ENCODE measurements at regions of chr16 and their contacts with region 1.

Region 1: DNA sequence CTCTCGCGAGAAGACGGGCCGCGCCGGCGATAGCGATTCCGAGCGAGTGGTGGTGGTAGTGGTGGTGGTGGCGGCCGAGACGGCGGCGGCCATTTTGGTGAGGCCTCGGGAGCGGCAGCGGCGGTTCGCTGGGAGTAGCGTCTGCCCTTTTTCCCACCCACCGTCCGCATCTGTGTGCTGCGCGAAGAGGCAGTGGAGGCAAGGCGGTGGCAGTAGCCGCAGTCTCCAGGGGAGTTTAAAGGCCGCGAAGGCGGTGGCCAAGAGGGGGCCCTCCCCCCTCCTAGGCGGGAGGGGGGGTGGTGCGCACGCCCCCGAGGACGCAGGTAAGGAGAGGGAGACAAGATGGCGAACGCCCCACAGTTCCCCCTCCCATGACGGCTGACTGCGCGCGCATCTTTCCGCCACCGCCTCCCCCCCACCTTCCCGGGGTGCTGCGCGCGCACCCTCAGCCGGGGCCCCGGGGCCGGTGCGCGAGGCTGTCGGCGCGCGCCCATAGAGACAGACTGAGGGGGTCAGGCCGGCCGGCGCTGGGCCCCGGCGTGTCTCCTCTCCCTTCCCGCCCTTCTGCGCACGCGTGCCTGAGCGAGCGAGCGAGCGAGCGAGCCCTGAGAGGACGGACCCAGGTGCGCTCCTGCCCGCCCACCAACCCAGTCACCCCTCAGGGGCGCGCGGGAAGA is 694 bp upstream of the SRCAP start:
- DNase-seq: peak; percentile 77
- H3K4me3 ChIP-seq: peak overlapping the region; percentile 95
- CTCF ChIP-seq: no peak

Region 2: GRCh38 chr16:30677931-30678585 is 20.2 kb before region 1 on chr16:
- CTCF ChIA-PET with region 1: interaction called, 23 read pairs
- POLR2A ChIA-PET with region 1: no interaction called
- DNase-seq: no peak
- H3K4me3 ChIP-seq: no peak overlapping the region
- CTCF ChIP-seq: no peak